ENCODE measurements at regions of chr20 and their contacts with region 1.

Region 1: DNA sequence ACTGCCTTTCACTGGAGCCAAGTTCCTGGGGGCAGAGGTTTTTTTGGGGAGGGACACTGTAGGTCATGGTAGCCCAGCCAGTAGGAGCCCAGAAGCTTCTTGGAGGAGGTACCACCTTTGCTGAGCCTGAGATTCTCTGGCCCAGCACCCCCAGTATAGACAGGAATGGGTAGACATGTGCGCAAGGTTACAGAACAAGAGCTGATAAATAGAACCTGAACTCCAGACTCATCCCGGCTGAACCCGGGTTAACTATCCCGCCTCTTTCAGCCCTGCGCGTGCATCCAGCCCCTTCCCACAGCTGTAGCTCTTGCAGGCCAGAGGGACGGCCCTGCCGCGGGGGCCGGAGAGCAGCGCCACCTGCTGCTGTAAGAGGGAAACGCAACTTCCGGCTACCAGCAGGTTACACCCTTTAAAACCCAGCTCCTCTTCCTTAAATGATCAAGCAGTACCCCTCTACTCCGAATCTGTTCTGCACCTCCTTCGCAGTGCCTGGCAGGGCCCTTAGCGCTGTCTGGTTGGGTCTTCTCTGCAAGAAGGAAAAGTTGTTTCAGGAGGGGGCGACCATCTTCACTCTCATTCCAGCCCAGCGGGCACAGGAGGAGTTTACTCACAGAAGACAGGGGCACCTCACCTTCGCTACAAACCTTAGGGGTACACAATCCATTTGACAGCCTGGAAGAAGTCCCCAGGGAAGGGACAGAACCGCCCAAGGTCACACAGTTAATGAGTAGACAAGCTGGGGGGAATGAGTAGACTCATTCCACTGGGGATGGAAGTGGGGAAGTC is 7.5 kb downstream of the SRXN1 start:
- DNase-seq: peak; percentile 92
- H3K4me3 ChIP-seq: no peak overlapping the region; a peak in 1 of 4 replicates
- H3K27ac ChIP-seq: no peak overlapping the region; a peak in 1 of 4 replicates
- H3K4me1 ChIP-seq: peaks cover 0 to 3% of the 10 kb centered on the region in 2 experiments; a peak in 1 of 4 replicates
- H3K27me3 ChIP-seq: no peaks in the 10 kb centered on the region
- CTCF ChIP-seq: peak; percentile 94
- EP300 ChIP-seq: no peak
- RAD21 ChIP-seq: peak; percentile 88

Region 2: GRCh38 chr20:531608-532007 is 113.9 kb before region 1 on chr20:
- CTCF ChIA-PET with region 1: no interaction called
- POLR2A ChIA-PET with region 1: no interaction called
- DNase-seq: no peak
- H3K4me3 ChIP-seq: no peak overlapping the region
- H3K27ac ChIP-seq: no peak overlapping the region
- H3K4me1 ChIP-seq: peaks cover under 1 to 7% of the 10 kb centered on the region in 2 experiments; a peak in 2 of 4 replicates
- H3K27me3 ChIP-seq: no peaks in the 10 kb centered on the region
- CTCF ChIP-seq: no peak
- EP300 ChIP-seq: no peak
- RAD21 ChIP-seq: no peak

Region 3: DNA sequence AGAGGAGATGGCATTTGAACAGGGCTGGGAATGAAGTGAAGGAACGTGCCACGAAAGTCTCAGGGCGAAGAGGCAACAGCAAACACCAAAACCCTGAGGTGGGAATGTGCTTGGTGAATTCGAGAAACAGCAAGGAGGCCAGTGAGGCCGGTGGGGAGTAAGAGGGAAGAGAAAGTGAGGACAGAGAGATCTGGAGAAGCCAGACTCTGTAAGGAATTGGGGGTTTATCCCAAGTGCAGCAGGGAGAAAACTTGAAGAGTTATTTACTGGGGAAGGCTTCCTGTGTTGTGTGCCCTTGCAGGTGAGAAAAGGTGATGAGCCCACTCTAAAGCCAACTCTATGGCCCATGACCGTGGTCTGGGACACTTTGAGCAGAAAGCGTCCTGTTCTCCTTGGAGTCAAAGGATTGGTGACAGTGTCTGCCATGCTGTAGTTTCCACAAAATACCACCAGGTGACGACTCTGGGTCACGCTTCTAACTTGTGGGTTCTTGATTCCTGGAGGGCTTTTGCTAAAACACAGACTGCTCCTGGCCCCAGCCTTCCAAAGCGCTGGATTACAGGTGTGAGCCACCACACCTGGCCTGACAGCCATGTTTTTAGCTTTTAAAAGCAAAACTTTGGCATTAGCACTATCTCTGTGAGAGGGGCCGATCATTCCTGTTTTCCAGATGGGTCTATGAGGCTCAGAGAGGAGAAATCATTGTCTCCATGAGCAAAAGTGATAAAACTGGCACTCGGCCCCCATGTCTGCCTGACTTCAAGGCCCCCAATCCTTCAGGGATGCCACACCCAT is 83.9 kb before region 1 on chr20:
- CTCF ChIA-PET with region 1: interaction called, 150 read pairs
- POLR2A ChIA-PET with region 1: interaction called, 3 read pairs
- DNase-seq: peak; percentile 83
- H3K4me3 ChIP-seq: no peak overlapping the region; a peak in 1 of 4 replicates
- H3K27ac ChIP-seq: no peak overlapping the region
- H3K4me1 ChIP-seq: no peaks in the 10 kb centered on the region
- H3K27me3 ChIP-seq: peaks cover 13% of the 10 kb centered on the region
- CTCF ChIP-seq: peak; percentile 94
- EP300 ChIP-seq: no peak
- RAD21 ChIP-seq: peak; percentile 95

Region 4: DNA sequence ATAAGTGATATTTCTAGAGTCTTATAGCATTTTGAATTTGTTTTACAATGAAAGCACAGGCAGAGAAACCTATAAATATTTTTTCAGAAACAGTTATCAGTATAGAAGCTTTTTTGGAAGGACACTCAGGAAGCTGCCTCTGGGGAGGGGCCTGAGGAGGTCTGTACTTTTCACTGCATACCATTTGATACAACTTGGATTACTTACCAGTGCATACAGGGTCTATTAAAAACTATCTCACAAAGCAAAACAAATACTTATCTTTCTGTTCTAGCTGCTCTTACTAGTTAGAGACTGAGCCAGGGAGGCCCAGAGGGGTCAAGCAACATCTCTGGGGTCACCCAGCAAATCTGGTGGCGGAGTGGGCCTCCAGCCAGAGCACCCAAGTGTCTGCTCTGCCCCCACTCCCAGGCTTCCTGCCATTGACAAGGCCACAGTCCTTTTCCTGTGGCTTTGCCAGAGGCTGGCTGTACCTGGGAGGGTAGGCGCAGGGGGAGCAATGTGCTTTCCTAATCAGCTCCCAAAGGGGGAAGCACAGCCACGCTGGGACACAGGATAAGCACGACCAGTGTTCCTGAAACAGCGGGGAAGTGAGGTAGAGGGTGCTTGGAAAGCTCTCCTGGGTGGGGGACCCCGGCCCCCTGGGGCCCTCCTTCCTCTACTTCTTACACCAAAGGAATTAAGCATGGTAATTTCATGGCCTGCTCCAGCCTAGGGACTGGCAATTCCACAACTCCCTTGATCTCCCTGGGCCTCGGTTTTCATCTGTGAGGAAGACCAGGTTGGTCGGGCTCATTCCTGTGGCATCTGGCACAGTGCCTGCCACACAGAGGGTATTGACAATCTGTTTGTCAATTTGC is 43.2 kb before region 1 on chr20:
- CTCF ChIA-PET with region 1: interaction called, 13 read pairs
- POLR2A ChIA-PET with region 1: no interaction called
- DNase-seq: no peak
- H3K4me3 ChIP-seq: no peak overlapping the region
- H3K27ac ChIP-seq: no peak overlapping the region
- H3K4me1 ChIP-seq: peaks cover 0 to 3% of the 10 kb centered on the region in 2 experiments; a peak in 1 of 4 replicates
- H3K27me3 ChIP-seq: no peaks in the 10 kb centered on the region
- CTCF ChIP-seq: no peak
- EP300 ChIP-seq: no peak
- RAD21 ChIP-seq: no peak

Region 5: DNA sequence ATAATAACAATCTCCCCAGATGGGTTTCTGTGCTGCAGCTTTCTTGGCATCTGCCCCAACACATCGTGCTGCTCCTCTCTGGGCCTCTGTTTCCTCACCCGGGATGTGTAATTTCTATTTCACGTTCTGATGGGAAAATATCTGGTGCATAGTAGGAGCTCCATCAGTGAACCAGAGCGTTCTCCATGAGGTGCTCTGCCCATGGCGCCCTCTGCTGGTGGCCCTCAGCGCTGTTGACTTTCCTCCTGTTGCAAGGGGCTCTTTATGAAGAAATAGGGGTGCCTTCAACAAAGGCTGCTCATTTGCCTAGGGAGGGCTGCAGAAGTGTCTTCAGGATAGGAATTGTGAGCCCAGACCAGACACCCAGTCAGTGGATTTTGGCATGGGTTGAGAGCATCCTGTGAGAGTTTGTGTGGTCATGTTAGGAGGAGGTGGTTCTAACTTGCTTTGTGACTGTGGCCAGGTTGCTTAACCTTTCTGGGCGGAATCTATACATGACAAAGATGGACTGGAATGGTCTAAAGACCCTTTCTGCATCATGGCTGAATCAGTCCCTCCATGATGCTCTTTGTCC is 22.0 kb after region 1 on chr20:
- CTCF ChIA-PET with region 1: interaction called, 16 read pairs
- POLR2A ChIA-PET with region 1: no interaction called
- DNase-seq: peak; percentile 79
- H3K4me3 ChIP-seq: peak overlapping the region in 1 of 2 experiments; percentile 17; a peak in 1 of 4 replicates
- H3K27ac ChIP-seq: no peak overlapping the region
- H3K4me1 ChIP-seq: no peaks in the 10 kb centered on the region; a peak in 1 of 4 replicates
- H3K27me3 ChIP-seq: no peaks in the 10 kb centered on the region
- CTCF ChIP-seq: peak; percentile 86
- EP300 ChIP-seq: no peak
- RAD21 ChIP-seq: peak; percentile 56

Region 6: GRCh38 chr20:728248-728944 is 82.9 kb after region 1 on chr20:
- CTCF ChIA-PET with region 1: interaction called, 62 read pairs
- POLR2A ChIA-PET with region 1: no interaction called
- DNase-seq: peak; percentile 95
- H3K4me3 ChIP-seq: peak overlapping the region; percentile 52 to 60
- H3K27ac ChIP-seq: no peak overlapping the region; a peak in 1 of 4 replicates
- H3K4me1 ChIP-seq: no peaks in the 10 kb centered on the region; a peak in 1 of 4 replicates
- H3K27me3 ChIP-seq: peaks cover 14% of the 10 kb centered on the region; the same call in 1 of the 2 replicates
- CTCF ChIP-seq: peak; percentile 62
- EP300 ChIP-seq: no peak
- RAD21 ChIP-seq: peak; percentile 89